ENCODE measurements at regions of chr22 and their contacts with region 1.

Region 1: GRCh38 chr22:21712894-21713712 is 22.5 kb downstream of the YPEL1 start:
- H3K4me3 Mint-ChIP-seq: no peak overlapping the region
- H3K27ac Mint-ChIP-seq: no peak overlapping the region
- H3K4me1 Mint-ChIP-seq: peaks cover 20% of the 10 kb centered on the region
- H3K27me3 Mint-ChIP-seq: no peaks in the 10 kb centered on the region

Region 2: GRCh38 chr22:21837248-21837979 is 124.3 kb after region 1 on chr22:
- intact Hi-C with region 1: loop called (anchors 10 kb)
- H3K4me3 Mint-ChIP-seq: no peak overlapping the region
- H3K27ac Mint-ChIP-seq: peak overlapping the region; percentile 65
- H3K4me1 Mint-ChIP-seq: peaks cover 68% of the 10 kb centered on the region
- H3K27me3 Mint-ChIP-seq: no peaks in the 10 kb centered on the region

Region 3: DNA sequence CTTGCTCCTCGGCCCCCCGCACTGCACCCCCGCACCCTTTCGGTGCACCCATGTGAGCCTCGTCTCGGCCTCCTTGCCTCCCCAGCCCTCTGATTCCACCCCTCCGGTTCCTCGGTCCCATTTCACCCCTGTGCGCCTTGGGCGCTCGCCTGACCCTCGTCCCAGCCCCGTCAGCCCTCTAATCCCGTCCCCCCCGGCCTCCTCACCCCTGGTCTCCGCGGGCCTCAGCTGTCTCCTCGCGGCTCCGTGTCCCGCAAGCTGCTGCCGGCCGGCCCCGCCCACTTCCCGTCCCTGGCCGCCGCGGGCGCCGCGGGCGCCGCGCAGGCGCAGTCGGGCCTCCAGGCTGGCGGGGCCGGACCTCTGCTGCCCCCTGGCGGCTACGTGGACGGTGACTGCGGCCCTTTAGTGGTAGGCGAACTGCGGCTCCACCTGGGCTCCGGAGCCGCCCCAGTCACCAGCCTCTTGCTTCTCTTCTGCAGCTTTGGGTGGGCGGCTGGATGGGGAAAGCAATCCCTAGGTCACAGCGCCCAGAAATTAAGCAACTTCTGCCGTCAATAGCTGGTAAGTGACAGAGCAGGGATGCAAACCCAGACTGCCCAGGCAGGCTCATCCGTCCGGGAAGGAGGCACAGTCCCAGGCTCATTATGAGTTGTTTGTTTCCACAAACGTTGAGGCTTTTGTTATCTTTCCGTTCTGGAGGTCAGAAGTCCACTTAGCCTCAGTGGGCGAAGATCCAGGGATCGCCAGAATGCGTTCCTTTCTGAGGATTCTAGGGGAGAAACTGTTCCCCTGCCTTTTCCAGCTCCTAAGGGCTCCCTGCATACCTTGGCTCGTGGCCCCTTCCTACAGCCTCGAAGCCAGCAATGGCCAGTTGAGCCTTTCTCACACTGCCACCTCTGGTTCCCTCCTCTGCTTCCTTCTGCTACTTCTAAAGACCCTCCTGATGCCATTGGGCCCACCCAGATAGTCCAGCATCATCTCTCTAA is 239.8 kb after region 1 on chr22 and contains the start of gene PPM1F:
- intact Hi-C with region 1: loop called (anchors 1 kb)
- H3K4me3 Mint-ChIP-seq: peak within 1 kb of the TSS; percentile 95
- H3K27ac Mint-ChIP-seq: peak within 1 kb of the TSS; percentile 100
- H3K4me1 Mint-ChIP-seq: peaks cover 46% of the 10 kb centered on the region
- H3K27me3 Mint-ChIP-seq: no peaks in the 10 kb centered on the region

Measured in dendritic cell treated with granulocyte-macrophage colony-stimulating factor and Interleukin-4, amounts not matched to agents 40 ng/mL and 50 ng/mL, for 4 days (primary cell).